Calu3 (cell line): ENCODE measurements at regions of chr9 and their contacts with region 1.

Region 1: DNA sequence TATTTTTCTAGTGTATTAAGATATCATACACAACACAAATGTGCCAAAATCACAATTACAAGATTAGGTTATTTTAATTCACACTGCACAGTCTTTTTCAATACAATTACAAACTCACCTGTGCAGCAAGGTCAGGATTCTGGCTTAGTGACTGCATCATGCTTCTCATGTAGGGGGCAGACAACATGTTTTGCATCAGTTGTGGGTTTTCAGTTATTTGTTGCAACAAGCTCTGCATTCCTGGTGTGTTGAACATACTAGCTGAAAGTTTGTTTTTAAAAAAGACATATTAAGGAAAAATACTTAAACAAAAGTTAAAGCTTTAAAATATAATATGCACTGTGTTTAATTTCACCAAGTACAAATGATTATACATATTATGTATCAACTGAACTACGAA is 38.7 kb downstream of the UBQLN1 start:
- DNase-seq: no peak
- H3K4me3 Mint-ChIP-seq: no peak overlapping the region
- H3K27ac Mint-ChIP-seq: no peak overlapping the region
- H3K4me1 Mint-ChIP-seq: no peaks in the 10 kb centered on the region
- H3K27me3 Mint-ChIP-seq: no peaks in the 10 kb centered on the region
- CTCF ChIP-seq: no peak

Region 2: DNA sequence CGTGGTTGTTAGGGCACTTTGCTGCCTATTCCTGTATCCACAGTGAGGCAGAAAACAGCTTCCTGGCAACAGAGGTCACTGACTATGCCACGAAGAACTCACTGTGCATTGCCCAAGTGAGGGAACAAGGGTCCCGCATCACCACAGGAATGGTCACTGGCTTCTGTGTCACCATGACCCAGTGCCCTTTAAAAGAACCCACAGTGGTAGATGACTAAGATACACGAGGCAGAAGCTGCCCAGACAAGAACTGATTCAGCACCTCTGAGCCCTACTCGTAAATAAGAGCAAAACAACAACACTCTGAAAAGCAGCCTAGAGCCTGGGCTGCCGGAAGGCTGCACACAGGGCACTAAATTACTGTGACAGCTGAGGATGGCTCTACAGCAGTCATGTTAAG is 369.5 kb before region 1 on chr9:
- CTCF ChIA-PET with region 1: no interaction called
- intact Hi-C with region 1: no loop called
- DNase-seq: peak; percentile 21
- H3K4me3 Mint-ChIP-seq: no peak overlapping the region
- H3K27ac Mint-ChIP-seq: no peak overlapping the region
- H3K4me1 Mint-ChIP-seq: peaks cover 20% of the 10 kb centered on the region
- H3K27me3 Mint-ChIP-seq: no peaks in the 10 kb centered on the region
- CTCF ChIP-seq: no peak

Region 3: GRCh38 chr9:83656032-83656680 is 12.9 kb before region 1 on chr9:
- CTCF ChIA-PET with region 1: no interaction called
- intact Hi-C with region 1: loop called (anchors 1 kb)
- DNase-seq: no peak
- H3K4me3 Mint-ChIP-seq: no peak overlapping the region
- H3K27ac Mint-ChIP-seq: no peak overlapping the region
- H3K4me1 Mint-ChIP-seq: no peaks in the 10 kb centered on the region
- H3K27me3 Mint-ChIP-seq: no peaks in the 10 kb centered on the region
- CTCF ChIP-seq: no peak